Mammary epithelial cell (primary cell): ENCODE measurements at regions of chr20 and their contacts with region 1.

Region 1: DNA sequence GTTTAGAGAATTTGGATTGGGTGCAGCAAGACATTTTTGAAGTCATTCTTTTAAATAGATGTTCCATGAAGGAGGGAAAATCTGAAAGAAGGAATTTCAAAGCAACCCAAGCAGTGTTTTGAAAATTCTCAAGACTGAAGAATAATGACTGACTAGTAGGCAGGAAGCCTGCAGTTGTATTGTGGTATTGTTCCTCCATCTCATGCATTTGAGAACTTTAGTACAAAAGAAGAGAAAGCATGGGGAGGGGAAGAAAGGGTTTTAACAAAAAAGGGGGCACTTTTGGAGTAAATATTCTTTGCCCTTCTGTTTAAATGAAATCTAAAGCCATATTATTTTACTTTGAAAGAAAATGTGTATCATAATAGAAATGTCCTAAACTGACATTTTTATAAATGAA is 6.6 kb downstream of the NCOA3 start:
- DNase-seq: no peak
- H3K4me3 ChIP-seq: no peak overlapping the region
- H3K27ac ChIP-seq: no peak overlapping the region
- H3K4me1 ChIP-seq: peaks cover 3% of the 10 kb centered on the region
- H3K27me3 ChIP-seq: no peaks in the 10 kb centered on the region
- CTCF ChIP-seq: no peak

Region 2: GRCh38 chr20:47397652-47398301 is 110.5 kb before region 1 on chr20:
- CTCF ChIA-PET with region 1: no interaction called
- dilution Hi-C with region 1: loop called (anchors 5 kb)
- in situ Hi-C with region 1: no loop called
- intact Hi-C with region 1: no loop called
- DNase-seq: no peak
- H3K4me3 ChIP-seq: no peak overlapping the region
- H3K27ac ChIP-seq: no peak overlapping the region
- H3K4me1 ChIP-seq: peaks cover 9% of the 10 kb centered on the region
- H3K27me3 ChIP-seq: no peaks in the 10 kb centered on the region
- CTCF ChIP-seq: no peak

Region 3: DNA sequence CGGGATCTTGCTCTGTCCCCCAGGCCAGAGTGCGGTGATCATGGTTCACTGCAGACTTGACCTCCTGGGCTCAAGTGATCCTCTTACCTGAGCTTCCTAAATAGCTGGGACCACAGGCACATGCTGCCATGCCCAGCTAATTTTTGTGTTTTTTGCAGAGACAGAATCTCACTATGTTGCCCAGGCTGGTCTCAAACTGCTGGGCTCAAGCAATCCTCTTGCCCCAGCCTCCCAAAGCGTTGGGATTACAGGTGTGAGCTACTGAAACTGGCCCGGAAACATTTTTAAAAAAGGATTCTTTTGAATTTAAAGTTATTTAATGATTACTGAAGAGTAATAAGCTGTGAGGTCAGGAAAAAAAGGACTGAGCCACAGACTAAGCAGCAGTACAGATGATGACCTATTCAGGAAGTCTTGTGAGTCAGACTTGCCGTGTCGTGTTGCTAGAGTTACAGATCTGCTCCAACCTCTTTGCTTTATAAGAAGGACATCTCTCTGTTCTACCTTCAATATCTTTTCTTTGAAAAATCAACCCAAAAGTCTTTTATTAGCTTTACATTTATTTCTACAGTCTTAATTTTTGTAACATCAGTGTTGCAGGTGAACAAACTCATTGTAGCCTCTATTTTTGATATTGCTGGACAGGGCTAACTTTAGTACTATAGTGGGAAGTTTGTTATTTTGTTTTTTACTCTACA is 102.1 kb after region 1 on chr20:
- CTCF ChIA-PET with region 1: no interaction called
- dilution Hi-C with region 1: no loop called
- in situ Hi-C with region 1: no loop called
- intact Hi-C with region 1: no loop called
- DNase-seq: peak; percentile 69
- H3K4me3 ChIP-seq: no peak overlapping the region
- H3K27ac ChIP-seq: peak overlapping the region; percentile 76
- H3K4me1 ChIP-seq: peaks cover 11% of the 10 kb centered on the region
- H3K27me3 ChIP-seq: no peaks in the 10 kb centered on the region
- CTCF ChIP-seq: no peak